Endothelial cell of umbilical vein (primary cell): ENCODE measurements at regions of chr3 and their contacts with region 1.

Region 1: GRCh38 chr3:25594007-25594502 is 70.7 kb downstream of the TOP2B start:
- DNase-seq: peak; percentile 90
- H3K4me3 ChIP-seq: no peak overlapping the region
- H3K27ac ChIP-seq: no peak overlapping the region
- H3K4me1 ChIP-seq: peaks cover 6% of the 10 kb centered on the region
- H3K27me3 ChIP-seq: no peaks in the 10 kb centered on the region
- CTCF ChIP-seq: peak; percentile 48 to 75
- POLR2A ChIP-seq: no peak

Region 2: DNA sequence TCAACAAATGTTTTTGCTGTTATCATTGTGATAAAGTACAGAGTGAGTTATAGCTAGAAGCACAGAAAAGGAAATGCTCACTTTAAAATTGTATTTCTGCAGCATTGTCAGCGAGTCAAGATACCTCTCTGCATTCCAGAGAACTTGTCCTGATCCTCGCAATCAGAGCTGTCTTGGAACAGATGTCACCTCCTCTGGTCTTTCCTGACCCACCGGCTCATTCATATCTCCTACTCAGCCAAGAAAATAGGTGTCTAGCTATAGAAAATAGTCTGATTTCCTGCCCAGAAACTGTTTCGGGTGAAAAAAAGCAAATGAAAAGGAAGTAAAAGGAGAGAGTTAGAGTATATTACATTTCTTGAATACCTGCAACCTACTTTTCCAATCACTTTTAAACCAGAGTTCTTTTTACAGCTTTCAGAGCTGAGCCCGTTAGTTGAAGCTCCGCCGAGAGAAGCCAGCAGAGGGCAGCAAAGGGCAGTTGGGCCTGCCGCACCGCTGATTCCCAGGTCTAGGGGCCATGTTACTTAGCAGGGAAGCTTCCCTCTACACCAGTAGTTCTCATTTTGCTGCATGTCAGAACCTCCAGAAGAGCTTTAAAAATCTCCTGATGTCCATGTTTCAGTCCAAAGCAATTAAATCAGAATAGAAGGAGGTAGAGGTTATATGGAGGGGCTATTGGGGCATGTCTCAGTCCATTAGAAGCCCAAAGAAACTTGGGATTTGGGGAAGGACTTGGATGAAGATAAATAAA is 913.7 kb before region 1 on chr3:
- CTCF ChIA-PET with region 1: interaction called, 7 read pairs
- POLR2A ChIA-PET with region 1: no interaction called
- dilution Hi-C with region 1: no loop called
- intact Hi-C with region 1: loop called (anchors 1 kb)
- DNase-seq: peak; percentile 57
- H3K4me3 ChIP-seq: no peak overlapping the region
- H3K27ac ChIP-seq: no peak overlapping the region
- H3K4me1 ChIP-seq: no peaks in the 10 kb centered on the region
- H3K27me3 ChIP-seq: peaks cover 0 to 2% of the 10 kb centered on the region in 2 experiments
- CTCF ChIP-seq: peak; percentile 88 to 92
- POLR2A ChIP-seq: no peak

Region 3: GRCh38 chr3:24963762-24964625 is 630.1 kb before region 1 on chr3:
- CTCF ChIA-PET with region 1: interaction called, 31 read pairs
- POLR2A ChIA-PET with region 1: no interaction called
- dilution Hi-C with region 1: no loop called
- intact Hi-C with region 1: loop called (anchors 1 kb)
- DNase-seq: peak; percentile 40
- H3K4me3 ChIP-seq: no peak overlapping the region
- H3K27ac ChIP-seq: no peak overlapping the region
- H3K4me1 ChIP-seq: no peaks in the 10 kb centered on the region
- H3K27me3 ChIP-seq: no peaks in the 10 kb centered on the region
- CTCF ChIP-seq: peak; percentile 19 to 38
- POLR2A ChIP-seq: no peak

Region 4: DNA sequence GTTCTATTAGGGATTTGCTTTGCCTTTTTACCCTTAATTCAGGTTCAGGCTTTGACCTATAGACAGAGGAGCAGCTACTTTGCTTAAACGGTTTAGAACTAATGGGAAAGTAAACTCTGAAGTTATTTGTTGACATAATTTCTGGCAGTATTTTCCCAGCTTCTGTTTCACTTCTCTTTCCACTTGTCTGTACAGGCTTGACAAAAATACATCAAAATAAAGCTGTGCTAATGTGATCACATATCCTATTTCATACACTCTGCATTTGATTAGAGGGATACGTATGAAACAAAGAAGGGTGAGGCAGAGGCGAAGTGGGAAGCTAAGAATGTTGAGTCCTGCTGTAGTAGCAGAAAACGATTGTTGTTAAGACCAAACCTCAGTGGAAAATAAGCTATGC is 555.1 kb before region 1 on chr3:
- CTCF ChIA-PET with region 1: interaction called, 30 read pairs
- POLR2A ChIA-PET with region 1: no interaction called
- dilution Hi-C with region 1: no loop called
- intact Hi-C with region 1: no loop called
- DNase-seq: no peak
- H3K4me3 ChIP-seq: no peak overlapping the region
- H3K27ac ChIP-seq: no peak overlapping the region
- H3K4me1 ChIP-seq: no peaks in the 10 kb centered on the region
- H3K27me3 ChIP-seq: no peaks in the 10 kb centered on the region
- CTCF ChIP-seq: no peak
- POLR2A ChIP-seq: no peak

Region 5: GRCh38 chr3:25412269-25412668 is 181.8 kb before region 1 on chr3:
- CTCF ChIA-PET with region 1: interaction called, 6 read pairs
- POLR2A ChIA-PET with region 1: no interaction called
- dilution Hi-C with region 1: no loop called
- intact Hi-C with region 1: loop called (anchors 5 kb)
- DNase-seq: peak; percentile 61
- H3K4me3 ChIP-seq: no peak overlapping the region
- H3K27ac ChIP-seq: no peak overlapping the region
- H3K4me1 ChIP-seq: peaks cover 5% of the 10 kb centered on the region
- H3K27me3 ChIP-seq: peaks cover 0 to 2% of the 10 kb centered on the region in 2 experiments
- CTCF ChIP-seq: no peak
- POLR2A ChIP-seq: no peak

Region 6: GRCh38 chr3:25441234-25441856 is 152.7 kb before region 1 on chr3:
- CTCF ChIA-PET with region 1: interaction called, 11 read pairs
- POLR2A ChIA-PET with region 1: no interaction called
- dilution Hi-C with region 1: no loop called
- intact Hi-C with region 1: no loop called
- DNase-seq: no peak
- H3K4me3 ChIP-seq: no peak overlapping the region
- H3K27ac ChIP-seq: no peak overlapping the region
- H3K4me1 ChIP-seq: peaks cover 10% of the 10 kb centered on the region
- H3K27me3 ChIP-seq: no peaks in the 10 kb centered on the region
- CTCF ChIP-seq: peak; percentile 60 to 69
- POLR2A ChIP-seq: no peak

Region 7: DNA sequence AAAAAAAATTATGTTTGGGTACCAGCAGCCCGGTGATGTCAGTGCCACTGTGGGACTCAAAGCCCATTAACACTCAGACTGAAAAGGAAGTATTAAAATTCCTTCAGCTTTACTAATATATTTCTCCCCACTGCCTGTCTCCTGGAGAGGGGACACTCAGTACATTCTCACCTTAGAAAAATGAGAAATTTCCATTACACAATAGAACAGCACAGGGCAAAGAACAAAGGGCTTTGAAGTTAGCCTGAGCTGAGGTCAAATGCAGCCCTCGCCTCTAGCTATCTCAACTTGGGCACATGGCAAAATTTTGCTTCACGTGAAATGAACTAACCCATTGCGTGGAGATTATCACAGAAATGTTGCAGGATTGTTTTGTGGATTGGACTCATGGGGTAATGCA is 85.2 kb before region 1 on chr3:
- CTCF ChIA-PET with region 1: interaction called, 16 read pairs
- POLR2A ChIA-PET with region 1: no interaction called
- dilution Hi-C with region 1: no loop called
- intact Hi-C with region 1: loop called (anchors 2 kb)
- DNase-seq: peak; percentile 94
- H3K4me3 ChIP-seq: no peak overlapping the region
- H3K27ac ChIP-seq: peak overlapping the region; percentile 98
- H3K4me1 ChIP-seq: peaks cover 28% of the 10 kb centered on the region
- H3K27me3 ChIP-seq: no peaks in the 10 kb centered on the region
- CTCF ChIP-seq: no peak
- POLR2A ChIP-seq: no peak